ENCODE measurements at regions of chr4 and their contacts with region 1.

Region 1: DNA sequence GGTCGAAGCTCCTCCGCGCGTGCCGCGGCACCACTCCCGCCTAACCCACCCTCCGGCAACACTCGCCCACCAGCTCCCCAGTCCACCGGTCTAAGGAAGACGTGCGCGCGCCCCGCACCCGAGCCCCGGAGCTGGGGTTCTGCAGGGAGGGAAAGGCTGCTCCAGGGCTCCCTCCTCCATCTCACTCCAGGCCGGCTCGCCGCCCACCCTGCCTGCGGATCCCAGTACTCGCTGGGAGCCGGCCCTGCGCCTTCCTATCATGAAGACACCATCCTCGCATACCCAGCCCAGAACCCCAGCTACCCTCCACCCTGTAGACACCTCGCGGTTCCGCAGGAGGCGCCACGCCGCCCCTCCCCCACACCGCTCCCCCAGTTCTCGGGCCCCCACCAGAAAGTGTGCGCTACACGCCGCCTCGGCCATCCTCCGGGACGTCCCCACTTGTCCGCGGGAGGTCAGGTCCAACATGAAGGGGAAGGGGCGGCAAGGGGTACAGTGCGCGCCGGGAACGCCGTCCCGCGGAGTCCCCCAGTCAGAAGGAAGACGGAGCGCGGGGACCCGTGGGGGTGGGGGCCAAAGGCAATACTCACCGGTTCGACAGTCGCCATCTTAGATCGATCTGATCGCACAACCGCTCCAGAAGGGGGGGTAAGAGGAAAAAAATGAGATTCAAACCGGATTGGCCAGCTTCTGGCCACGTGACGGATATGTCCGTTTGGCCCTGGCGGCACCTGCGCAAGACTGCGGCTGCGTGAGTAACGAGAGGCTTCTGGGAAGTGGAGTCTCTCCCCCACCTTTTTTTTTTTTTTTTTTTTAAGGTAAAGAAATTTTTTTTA is at the start of gene EIF4E:
- DNase-seq: peak; percentile 83
- ATAC-seq: peak; percentile 74
- H3K4me3 Mint-ChIP-seq: peak within 1 kb of the TSS; percentile 96
- H3K27ac Mint-ChIP-seq: peak within 1 kb of the TSS; percentile 98
- H3K4me1 Mint-ChIP-seq: peaks cover 59% of the 10 kb centered on the region
- H3K27me3 Mint-ChIP-seq: no peaks in the 10 kb centered on the region
- CTCF ChIP-seq: no peak
- total RNA-seq, gene EIF4E: 87.3 and 90.5 TPM in 2 replicates

Region 2: GRCh38 chr4:98143001-98143899 is 785.5 kb before region 1 on chr4 and contains the start of gene STPG2:
- CTCF ChIA-PET with region 1: interaction called, 3 read pairs
- POLR2A ChIA-PET with region 1: interaction called, 13 read pairs
- intact Hi-C with region 1: loop called (anchors 1 kb)
- DNase-seq: peak; percentile 97
- ATAC-seq: peak; percentile 99
- H3K4me3 Mint-ChIP-seq: peak within 1 kb of the TSS; percentile 92
- H3K27ac Mint-ChIP-seq: peak within 1 kb of the TSS; percentile 97
- H3K4me1 Mint-ChIP-seq: peaks cover 25% of the 10 kb centered on the region
- H3K27me3 Mint-ChIP-seq: no peaks in the 10 kb centered on the region
- CTCF ChIP-seq: no peak
- total RNA-seq, gene STPG2: 0.37 and 0.69 TPM in 2 replicates

Region 3: GRCh38 chr4:98446499-98447375 is 482.0 kb before region 1 on chr4:
- CTCF ChIA-PET with region 1: no interaction called
- POLR2A ChIA-PET with region 1: interaction called, 13 read pairs
- intact Hi-C with region 1: loop called (anchors 1 kb)
- DNase-seq: no peak
- ATAC-seq: peak; percentile 67
- H3K4me3 Mint-ChIP-seq: peak overlapping the region; percentile 72
- H3K27ac Mint-ChIP-seq: peak overlapping the region; percentile 87
- H3K4me1 Mint-ChIP-seq: peaks cover 41% of the 10 kb centered on the region
- H3K27me3 Mint-ChIP-seq: no peaks in the 10 kb centered on the region
- CTCF ChIP-seq: no peak

Region 4: GRCh38 chr4:98905839-98906238 is 22.9 kb before region 1 on chr4:
- CTCF ChIA-PET with region 1: no interaction called
- POLR2A ChIA-PET with region 1: interaction called, 3 read pairs
- intact Hi-C with region 1: loop called (anchors 2 kb)
- DNase-seq: no peak
- ATAC-seq: no peak
- H3K4me3 Mint-ChIP-seq: no peak overlapping the region
- H3K27ac Mint-ChIP-seq: no peak overlapping the region
- H3K4me1 Mint-ChIP-seq: peaks cover 80% of the 10 kb centered on the region
- H3K27me3 Mint-ChIP-seq: no peaks in the 10 kb centered on the region
- CTCF ChIP-seq: no peak

Region 5: DNA sequence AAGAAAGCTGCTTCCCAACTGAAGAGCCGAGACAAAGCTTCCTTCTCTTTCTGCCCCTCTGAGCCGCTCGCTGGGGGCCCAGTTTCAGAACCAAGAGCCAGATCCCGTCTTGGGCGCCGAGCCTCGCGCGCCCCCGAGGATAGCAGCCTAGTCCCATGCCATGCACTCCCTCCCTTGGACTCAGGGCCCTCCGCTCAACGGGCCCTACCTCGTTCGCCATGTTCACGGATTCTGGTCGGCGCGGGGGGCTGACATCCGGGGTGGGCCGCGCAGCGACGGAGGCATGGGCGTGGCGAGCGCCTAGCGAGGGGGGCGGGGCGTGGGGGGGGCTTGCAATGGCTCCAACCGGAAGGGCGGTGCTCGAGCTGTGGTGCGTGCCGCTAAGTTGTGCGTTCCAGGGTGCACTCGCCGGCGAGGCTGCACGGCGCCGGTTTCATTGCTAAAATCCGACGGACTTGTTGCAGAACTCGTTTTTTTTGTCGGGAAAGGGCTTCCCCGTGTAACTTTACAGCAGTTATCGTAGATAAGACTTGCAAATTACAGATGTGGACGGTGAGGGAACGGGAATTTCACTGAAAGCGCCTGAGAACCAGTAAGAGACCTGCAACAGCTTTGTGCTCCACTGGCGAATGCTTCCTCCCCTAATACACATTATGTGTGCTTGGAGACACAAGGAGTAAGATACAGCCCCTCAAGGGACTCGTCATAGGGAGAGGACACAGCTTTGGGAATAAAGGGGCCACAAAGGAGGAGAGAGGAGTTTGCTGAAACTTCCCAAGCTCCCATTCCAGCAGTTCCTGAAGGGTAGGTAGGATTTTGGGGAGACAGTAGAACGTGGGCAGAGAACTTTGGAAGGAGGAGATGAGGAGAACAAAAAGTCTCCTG is 160.0 kb after region 1 on chr4 and contains the start of gene ADH5:
- CTCF ChIA-PET with region 1: no interaction called
- POLR2A ChIA-PET with region 1: interaction called, 45 read pairs
- intact Hi-C with region 1: loop called (anchors 1 kb)
- DNase-seq: peak; percentile 77
- ATAC-seq: peak; percentile 95
- H3K4me3 Mint-ChIP-seq: peak within 1 kb of the TSS; percentile 99
- H3K27ac Mint-ChIP-seq: peak within 1 kb of the TSS; percentile 99
- H3K4me1 Mint-ChIP-seq: peaks cover 41% of the 10 kb centered on the region
- H3K27me3 Mint-ChIP-seq: no peaks in the 10 kb centered on the region
- CTCF ChIP-seq: no peak
- total RNA-seq, gene ADH5: 70.1 and 74.2 TPM in 2 replicates

Region 6: GRCh38 chr4:99949034-99949998 is 1020.6 kb after region 1 on chr4:
- CTCF ChIA-PET with region 1: no interaction called
- POLR2A ChIA-PET with region 1: no interaction called
- intact Hi-C with region 1: loop called (anchors 1 kb)
- DNase-seq: peak; percentile 69
- ATAC-seq: peak; percentile 32
- H3K4me3 Mint-ChIP-seq: no peak overlapping the region
- H3K27ac Mint-ChIP-seq: no peak overlapping the region
- H3K4me1 Mint-ChIP-seq: peaks cover 31% of the 10 kb centered on the region
- H3K27me3 Mint-ChIP-seq: no peaks in the 10 kb centered on the region
- CTCF ChIP-seq: no peak

Measured in activated B cell treated with CpG ODN at 0.5 μM for 24 hours (primary cell).